ENCODE measurements at regions of chr3 and their contacts with region 1.

Region 1: DNA sequence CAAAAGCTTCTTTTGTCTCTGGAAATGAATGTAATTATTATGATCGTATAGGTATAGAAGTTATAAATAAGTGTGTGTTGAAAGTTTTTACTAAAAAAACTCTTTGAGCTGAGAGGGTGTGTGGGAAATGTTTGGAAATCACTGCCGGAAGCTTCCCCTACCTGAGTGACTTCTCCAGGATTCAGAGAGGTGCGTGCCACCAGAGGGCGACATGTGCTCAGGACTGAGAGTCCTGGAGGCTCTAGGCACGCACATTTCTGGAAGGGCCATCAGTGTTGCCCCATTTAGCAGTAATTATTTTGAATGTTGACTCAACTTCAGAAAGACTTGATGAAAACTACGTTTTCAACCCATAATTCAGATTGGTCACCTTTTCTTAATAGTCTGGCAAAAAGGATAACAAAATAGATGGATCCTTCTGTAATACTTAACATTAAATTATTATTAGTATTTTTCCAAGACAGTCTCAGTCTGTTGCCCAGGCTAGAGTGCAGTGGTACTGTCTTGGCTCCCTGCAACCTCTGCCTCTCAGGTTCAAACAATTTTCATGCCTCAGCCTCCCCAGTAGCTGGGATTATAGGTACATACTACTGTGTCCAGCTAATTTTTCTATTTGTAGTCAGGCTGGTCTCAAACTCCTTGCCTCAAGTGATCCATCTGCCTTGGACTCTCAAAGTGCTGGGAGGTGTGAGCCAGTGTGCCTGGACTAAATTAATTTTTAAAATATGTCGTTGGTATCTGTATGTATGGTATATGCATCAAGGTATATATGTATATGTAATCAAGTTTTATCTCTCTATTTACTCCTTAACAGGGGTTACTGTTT is 34.5 kb downstream of the GPR171 start:
- DNase-seq: peak; percentile 84
- H3K4me3 ChIP-seq: no peak overlapping the region
- H3K27ac ChIP-seq: peak overlapping the region in 1 of 4 donors; percentile 46
- H3K4me1 ChIP-seq: no peaks in the 10 kb centered on the region
- H3K27me3 ChIP-seq: no peaks in the 10 kb centered on the region
- CTCF ChIP-seq: peak; percentile 15 to 64 (median 52)
- EP300 ChIP-seq: no peak
- POLR2A ChIP-seq: no peak

Region 2: DNA sequence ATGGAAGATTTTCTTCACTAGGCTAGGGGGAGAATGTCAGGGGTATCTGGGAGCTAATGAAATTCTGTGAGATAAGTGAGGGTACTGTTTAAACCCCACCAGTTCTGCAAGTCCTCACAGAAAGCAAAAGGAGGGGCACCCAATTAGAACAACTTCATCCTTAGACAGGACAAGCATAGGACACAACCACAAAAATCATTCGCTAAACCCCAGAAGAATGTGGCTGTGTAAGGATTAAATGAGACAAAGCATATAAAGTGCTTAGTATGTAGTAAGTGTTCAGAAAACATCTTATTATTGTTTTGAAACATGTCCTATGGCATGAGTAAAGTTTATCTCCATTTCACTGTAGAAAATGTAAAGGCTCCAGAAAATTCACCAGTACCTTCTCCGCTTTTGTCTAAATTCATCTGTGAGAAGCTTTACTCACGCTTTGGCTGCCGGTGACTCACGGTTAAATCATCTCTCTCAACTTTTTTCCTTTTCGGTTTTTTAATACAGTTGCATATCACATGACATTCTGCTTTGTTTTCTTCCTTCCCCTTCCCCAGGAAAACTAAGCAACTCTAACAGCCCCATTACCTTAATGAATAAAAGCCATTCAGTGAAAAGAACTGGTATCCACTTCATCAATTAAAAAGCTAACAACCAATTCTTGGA is 197.7 kb before region 1 on chr3:
- intact Hi-C with region 1: no loop called
- DNase-seq: no peak
- H3K4me3 ChIP-seq: no peak overlapping the region
- H3K27ac ChIP-seq: no peak overlapping the region
- H3K4me1 ChIP-seq: no peaks in the 10 kb centered on the region
- H3K27me3 ChIP-seq: peaks cover 0 to 4% (median 0%) of the 10 kb centered on the region in 3 donors
- CTCF ChIP-seq: no peak
- EP300 ChIP-seq: no peak
- POLR2A ChIP-seq: no peak

Region 3: GRCh38 chr3:150996731-150997130 is 171.8 kb before region 1 on chr3:
- intact Hi-C with region 1: no loop called
- DNase-seq: no peak
- H3K4me3 ChIP-seq: no peak overlapping the region
- H3K27ac ChIP-seq: no peak overlapping the region
- H3K4me1 ChIP-seq: no peaks in the 10 kb centered on the region
- H3K27me3 ChIP-seq: no peaks in the 10 kb centered on the region
- CTCF ChIP-seq: no peak
- EP300 ChIP-seq: no peak
- POLR2A ChIP-seq: no peak

Region 4: DNA sequence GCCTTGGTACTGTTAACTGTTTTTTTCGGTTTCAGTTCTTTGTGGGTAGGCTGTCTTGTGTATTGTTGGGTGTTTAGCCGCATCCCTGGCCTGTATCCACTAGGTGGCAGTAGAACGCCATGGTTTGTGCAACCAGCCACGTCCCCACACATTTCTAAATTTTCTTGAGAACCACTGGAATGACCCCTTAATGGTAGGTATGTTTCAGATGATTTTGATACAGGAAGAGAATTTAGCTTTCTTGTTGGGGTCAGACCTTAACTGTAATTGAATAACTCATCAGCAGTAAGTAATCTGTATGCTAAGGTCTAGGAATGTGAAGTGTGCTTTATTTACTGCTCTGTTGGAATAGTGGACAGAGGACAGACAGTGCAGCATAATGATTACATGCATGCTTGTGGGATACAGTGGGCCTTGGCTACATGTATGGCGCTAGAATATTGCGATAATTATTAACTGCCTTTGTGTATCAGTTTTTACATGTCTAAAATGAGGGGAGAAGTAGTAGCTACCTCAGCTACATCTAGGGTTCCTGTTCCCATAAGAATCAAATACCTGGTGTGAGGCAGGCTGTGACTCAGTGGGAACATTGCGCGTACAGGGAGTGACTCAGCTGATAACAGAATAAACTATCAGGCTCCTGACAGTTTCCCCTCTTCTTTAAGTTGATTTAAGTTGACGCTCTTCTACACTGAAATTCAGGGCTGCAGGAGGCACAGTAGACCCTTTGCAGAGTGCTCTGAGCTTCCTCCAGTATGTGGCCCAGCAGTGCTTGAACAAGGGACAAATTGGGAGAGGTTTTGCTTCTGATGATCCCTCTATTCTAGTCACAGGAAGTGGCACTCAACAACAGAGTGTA is 59.6 kb after region 1 on chr3:
- intact Hi-C with region 1: loop called (anchors 5 kb)
- DNase-seq: peak; percentile 84
- H3K4me3 ChIP-seq: no peak overlapping the region
- H3K27ac ChIP-seq: peak overlapping the region; percentile 29 to 62 (median 52)
- H3K4me1 ChIP-seq: peaks cover 0 to 32% (median 18%) of the 10 kb centered on the region in 4 donors
- H3K27me3 ChIP-seq: no peaks in the 10 kb centered on the region
- CTCF ChIP-seq: peak; percentile 79 to 96 (median 84)
- EP300 ChIP-seq: no peak
- POLR2A ChIP-seq: no peak

Region 5: GRCh38 chr3:151282921-151283320 is 114.4 kb after region 1 on chr3:
- intact Hi-C with region 1: loop called (anchors 1 kb)
- DNase-seq: no peak
- H3K4me3 ChIP-seq: no peak overlapping the region
- H3K27ac ChIP-seq: peak overlapping the region in 2 of 4 donors; percentile 40 to 65
- H3K4me1 ChIP-seq: peaks cover 0 to 40% (median 15%) of the 10 kb centered on the region in 4 donors
- H3K27me3 ChIP-seq: no peaks in the 10 kb centered on the region
- CTCF ChIP-seq: peak; percentile 48 to 70 (median 58)
- EP300 ChIP-seq: no peak
- POLR2A ChIP-seq: no peak

Region 6: DNA sequence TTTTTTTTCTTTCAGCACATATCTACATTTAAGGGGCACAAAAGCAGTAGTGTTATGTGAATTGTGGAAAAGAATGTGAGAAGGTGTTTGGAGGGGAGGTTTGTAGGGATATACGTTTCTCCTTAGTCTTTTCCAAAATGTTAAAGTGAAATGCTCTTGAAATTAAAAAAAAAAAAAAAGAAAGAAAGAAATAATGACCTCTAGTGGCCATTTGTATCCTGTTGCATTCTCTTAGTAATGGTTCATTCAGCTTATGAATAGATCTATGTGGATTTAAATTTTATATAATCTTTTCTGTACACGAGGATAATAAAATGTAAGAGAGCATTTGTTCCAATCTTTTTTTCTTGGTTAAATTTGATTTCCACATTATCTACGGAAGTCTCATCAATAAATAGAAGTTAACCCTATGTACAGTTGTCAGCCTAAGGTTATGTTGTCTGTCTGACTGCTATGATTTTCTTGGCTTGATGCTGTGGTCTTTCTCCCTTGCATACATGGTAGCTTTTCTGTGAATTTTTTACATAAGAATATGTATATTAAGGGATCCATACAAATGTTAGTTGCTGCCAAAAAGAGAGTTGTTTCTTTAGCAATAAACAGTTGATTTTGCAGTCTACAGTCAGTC is 159.2 kb after region 1 on chr3:
- intact Hi-C with region 1: loop called (anchors 5 kb)
- DNase-seq: no peak
- H3K4me3 ChIP-seq: peak overlapping the region in 2 of 4 donors; percentile 6 to 24
- H3K27ac ChIP-seq: no peak overlapping the region
- H3K4me1 ChIP-seq: no peaks in the 10 kb centered on the region
- H3K27me3 ChIP-seq: no peaks in the 10 kb centered on the region
- CTCF ChIP-seq: peak in 2 of 4 experiments; percentile 16 to 52
- EP300 ChIP-seq: no peak
- POLR2A ChIP-seq: no peak

Region 7: GRCh38 chr3:151918253-151919029 is 750.0 kb after region 1 on chr3:
- intact Hi-C with region 1: loop called (anchors 10 kb)
- DNase-seq: no peak
- H3K4me3 ChIP-seq: no peak overlapping the region
- H3K27ac ChIP-seq: no peak overlapping the region
- H3K4me1 ChIP-seq: peaks cover 0 to 10% (median 2%) of the 10 kb centered on the region in 4 donors
- H3K27me3 ChIP-seq: no peaks in the 10 kb centered on the region
- CTCF ChIP-seq: peak in 3 of 4 experiments; percentile 35 to 62 (median 53)
- EP300 ChIP-seq: no peak
- POLR2A ChIP-seq: no peak

Measured in sigmoid colon (tissue), 7 donors.